IMR-90 (cell line): ENCODE measurements at regions of chr10 and their contacts with region 1.

Region 1: GRCh38 chr10:88131511-88132154 is 268.2 kb downstream of the PTEN start:
- DNase-seq: no peak
- ATAC-seq: no peak
- H3K4me3 ChIP-seq: no peak overlapping the region
- H3K27ac ChIP-seq: no peak overlapping the region
- H3K4me1 ChIP-seq: peaks cover 3% of the 10 kb centered on the region; the same call in 1 of the 2 replicates
- H3K27me3 ChIP-seq: no peaks in the 10 kb centered on the region
- CTCF ChIP-seq: no peak
- POLR2A ChIP-seq: no peak
- RAD21 ChIP-seq: no peak

Region 2: GRCh38 chr10:88114368-88114767 is 17.3 kb before region 1 on chr10:
- CTCF ChIA-PET with region 1: interaction called, 4 read pairs
- POLR2A ChIA-PET with region 1: no interaction called
- dilution Hi-C with region 1: no loop called
- in situ Hi-C with region 1: no loop called
- intact Hi-C with region 1: loop called (anchors 1 kb)
- DNase-seq: peak; percentile 25
- ATAC-seq: no peak
- H3K4me3 ChIP-seq: no peak overlapping the region
- H3K27ac ChIP-seq: no peak overlapping the region
- H3K4me1 ChIP-seq: peaks cover 23% of the 10 kb centered on the region
- H3K27me3 ChIP-seq: no peaks in the 10 kb centered on the region
- CTCF ChIP-seq: peak; percentile 34
- POLR2A ChIP-seq: no peak
- RAD21 ChIP-seq: peak; percentile 48